Activated naive CD4-positive, alpha-beta T cell treated with anti-CD3 and anti-CD28 coated beads for 36 hours (primary cell): ENCODE measurements at regions of chr10 and their contacts with region 1.

Region 1: DNA sequence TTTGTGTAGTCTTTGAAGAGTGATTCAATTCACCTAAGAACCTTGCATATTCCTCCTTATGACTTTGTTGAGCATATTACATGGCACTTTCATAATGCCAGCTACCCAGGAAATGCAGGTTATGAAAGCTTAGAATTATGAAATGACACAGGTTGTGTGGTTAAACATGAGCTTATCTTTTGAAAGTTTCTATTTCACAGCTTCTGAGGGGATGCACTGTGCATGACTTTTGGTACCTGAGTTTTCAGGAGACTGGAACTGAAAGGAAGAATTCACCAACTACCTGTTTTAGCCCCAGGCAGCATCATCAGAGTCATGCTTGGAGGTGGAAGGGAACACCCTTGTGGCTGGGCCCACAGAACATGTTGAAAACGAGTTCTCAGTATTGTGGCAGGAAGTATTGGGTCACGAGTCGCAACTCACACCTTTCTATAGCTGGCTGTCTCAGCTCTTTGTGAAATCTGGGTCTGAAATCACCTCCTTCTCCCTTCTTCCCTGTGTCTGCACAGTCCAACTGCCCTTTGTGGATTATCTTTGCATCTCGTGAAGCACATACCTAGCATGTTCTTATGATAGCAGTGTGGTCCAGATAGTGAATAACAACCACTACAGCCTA is 228.2 kb downstream of the PTEN start:
- DNase-seq: peak; percentile 91
- H3K4me3 Mint-ChIP-seq: no peak overlapping the region
- H3K27ac Mint-ChIP-seq: no peak overlapping the region
- H3K4me1 Mint-ChIP-seq: peaks cover 34% of the 10 kb centered on the region
- H3K27me3 Mint-ChIP-seq: peaks cover 19% of the 10 kb centered on the region

Region 2: DNA sequence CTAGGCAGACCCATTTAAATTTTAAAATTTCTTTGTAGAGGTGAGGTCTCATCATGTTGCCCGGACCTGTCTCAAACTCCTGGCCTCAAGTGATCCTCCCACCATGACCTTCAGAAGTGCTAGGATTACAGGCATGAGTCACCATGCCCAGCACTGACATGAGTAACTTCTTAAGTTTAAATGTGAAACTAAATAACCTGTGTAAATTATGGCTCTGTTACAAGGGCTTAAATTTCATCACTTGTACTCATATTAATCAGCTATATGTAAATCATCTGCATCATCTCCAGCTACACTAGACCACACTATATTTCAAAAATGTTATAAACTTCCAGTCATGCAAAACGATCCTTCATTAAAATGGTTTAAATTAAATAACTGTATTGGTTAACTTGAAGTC is 329.7 kb before region 1 on chr10:
- CTCF ChIA-PET with region 1: no interaction called
- intact Hi-C with region 1: loop called (anchors 1 kb)
- DNase-seq: peak; percentile 77
- H3K4me3 Mint-ChIP-seq: no peak overlapping the region
- H3K27ac Mint-ChIP-seq: peak overlapping the region; percentile 86
- H3K4me1 Mint-ChIP-seq: peaks cover 37% of the 10 kb centered on the region
- H3K27me3 Mint-ChIP-seq: no peaks in the 10 kb centered on the region

Region 3: GRCh38 chr10:87878664-87879459 is 212.7 kb before region 1 on chr10:
- CTCF ChIA-PET with region 1: no interaction called
- intact Hi-C with region 1: no loop called
- DNase-seq: no peak
- H3K4me3 Mint-ChIP-seq: no peak overlapping the region
- H3K27ac Mint-ChIP-seq: no peak overlapping the region
- H3K4me1 Mint-ChIP-seq: peaks cover 38% of the 10 kb centered on the region
- H3K27me3 Mint-ChIP-seq: no peaks in the 10 kb centered on the region

Region 4: GRCh38 chr10:88064608-88065382 is 26.8 kb before region 1 on chr10:
- CTCF ChIA-PET with region 1: interaction called, 9 read pairs
- intact Hi-C with region 1: loop called (anchors 1 kb)
- DNase-seq: peak; percentile 34
- H3K4me3 Mint-ChIP-seq: no peak overlapping the region
- H3K27ac Mint-ChIP-seq: no peak overlapping the region
- H3K4me1 Mint-ChIP-seq: peaks cover 68% of the 10 kb centered on the region
- H3K27me3 Mint-ChIP-seq: peaks cover 11% of the 10 kb centered on the region

Region 5: GRCh38 chr10:88152720-88153119 is 61.1 kb after region 1 on chr10:
- CTCF ChIA-PET with region 1: no interaction called
- intact Hi-C with region 1: loop called (anchors 1 kb)
- DNase-seq: peak; percentile 76
- H3K4me3 Mint-ChIP-seq: no peak overlapping the region
- H3K27ac Mint-ChIP-seq: peak overlapping the region; percentile 86
- H3K4me1 Mint-ChIP-seq: peaks cover 22% of the 10 kb centered on the region
- H3K27me3 Mint-ChIP-seq: no peaks in the 10 kb centered on the region

Region 6: GRCh38 chr10:88172159-88172558 is 80.6 kb after region 1 on chr10:
- CTCF ChIA-PET with region 1: no interaction called
- intact Hi-C with region 1: no loop called
- DNase-seq: no peak
- H3K4me3 Mint-ChIP-seq: no peak overlapping the region
- H3K27ac Mint-ChIP-seq: no peak overlapping the region
- H3K4me1 Mint-ChIP-seq: peaks cover 24% of the 10 kb centered on the region
- H3K27me3 Mint-ChIP-seq: no peaks in the 10 kb centered on the region

Region 7: GRCh38 chr10:88382699-88383098 is 291.1 kb after region 1 on chr10:
- CTCF ChIA-PET with region 1: no interaction called
- intact Hi-C with region 1: no loop called
- DNase-seq: no peak
- H3K4me3 Mint-ChIP-seq: no peak overlapping the region
- H3K27ac Mint-ChIP-seq: no peak overlapping the region
- H3K4me1 Mint-ChIP-seq: peaks cover 19% of the 10 kb centered on the region
- H3K27me3 Mint-ChIP-seq: no peaks in the 10 kb centered on the region

Region 8: DNA sequence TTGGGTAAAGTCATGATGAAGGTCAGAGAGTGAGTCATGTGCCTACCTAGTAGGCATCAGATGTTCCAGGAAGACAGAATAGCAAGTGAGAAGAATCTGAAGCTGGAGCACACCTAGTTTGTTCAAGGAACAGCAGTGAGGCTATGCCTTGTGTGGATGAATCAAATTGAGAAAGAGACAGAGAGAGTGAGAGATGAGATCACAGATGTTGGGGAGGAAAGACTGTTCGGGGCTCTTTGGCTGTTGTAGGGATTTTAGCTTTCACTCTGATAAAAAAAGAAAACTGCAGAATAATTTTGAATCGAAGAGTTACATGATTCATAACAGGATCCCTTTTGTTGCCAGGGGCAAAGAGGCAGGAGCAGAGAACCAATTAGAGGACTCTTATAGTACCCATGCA is 578.9 kb after region 1 on chr10:
- CTCF ChIA-PET with region 1: no interaction called
- intact Hi-C with region 1: loop called (anchors 1 kb)
- DNase-seq: peak; percentile 44
- H3K4me3 Mint-ChIP-seq: no peak overlapping the region
- H3K27ac Mint-ChIP-seq: peak overlapping the region; percentile 33
- H3K4me1 Mint-ChIP-seq: peaks cover 24% of the 10 kb centered on the region
- H3K27me3 Mint-ChIP-seq: peaks cover 7% of the 10 kb centered on the region

Region 9: DNA sequence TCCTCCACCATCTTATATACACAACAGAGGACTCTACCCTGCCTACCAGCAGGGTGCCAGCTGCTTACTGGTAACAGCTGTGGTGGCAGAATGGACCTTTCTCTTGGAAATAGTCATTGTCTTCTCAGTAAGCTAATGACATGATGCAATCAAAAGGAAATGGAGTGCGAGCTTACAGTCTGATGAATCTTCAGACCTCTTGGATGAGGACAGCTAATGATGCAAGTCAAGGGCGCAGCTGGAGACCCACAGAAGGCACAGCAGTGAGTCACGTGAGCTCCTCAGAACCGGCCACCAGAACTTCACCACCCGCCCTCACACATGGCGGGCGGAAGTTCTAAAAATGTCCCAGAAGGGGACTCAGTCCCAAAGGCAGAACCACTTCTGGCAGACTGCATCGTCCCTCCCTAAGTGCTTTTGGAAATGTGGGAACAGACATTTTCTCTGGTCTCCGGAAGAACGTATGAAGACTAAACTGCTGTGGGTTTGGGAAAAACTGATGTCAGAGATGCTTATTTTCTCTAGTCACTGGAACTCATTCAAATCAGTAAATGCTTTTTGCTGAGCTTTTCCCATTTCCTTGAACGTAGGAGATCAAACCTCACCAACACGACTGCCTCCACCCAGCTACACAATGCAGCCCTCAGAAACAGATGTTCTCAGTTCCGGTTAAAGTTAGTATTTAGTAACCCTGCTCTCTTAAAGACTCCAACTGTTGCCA is 995.4 kb after region 1 on chr10:
- CTCF ChIA-PET with region 1: no interaction called
- intact Hi-C with region 1: loop called (anchors 1 kb)
- DNase-seq: peak; percentile 20
- H3K4me3 Mint-ChIP-seq: no peak overlapping the region
- H3K27ac Mint-ChIP-seq: no peak overlapping the region
- H3K4me1 Mint-ChIP-seq: peaks cover 5% of the 10 kb centered on the region
- H3K27me3 Mint-ChIP-seq: no peaks in the 10 kb centered on the region